Activated B cell treated with CpG ODN at 0.5 μM for 24 hours (primary cell): ENCODE measurements at regions of chr10 and their contacts with region 1.

Region 1: DNA sequence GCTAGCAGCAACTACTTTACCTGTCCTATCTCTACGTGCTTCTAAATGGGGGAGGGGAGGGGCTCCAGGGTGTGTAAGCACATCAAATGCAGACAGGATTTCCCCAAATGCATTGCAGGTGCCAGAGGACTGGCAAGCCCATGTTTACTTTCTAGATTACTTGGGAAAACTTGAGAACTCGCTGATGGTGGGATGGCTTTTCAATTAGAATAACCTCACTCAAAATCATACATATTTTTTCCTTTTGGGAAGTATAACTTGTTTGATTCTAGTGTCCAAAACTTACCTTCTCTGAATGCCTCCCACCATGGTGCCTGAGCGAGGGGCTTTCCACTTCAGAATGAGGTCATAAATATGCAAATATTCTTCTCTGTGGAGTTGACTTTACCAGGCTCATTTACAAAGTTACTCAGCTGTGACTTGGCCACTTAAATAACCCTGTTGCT is 191.3 kb upstream of the RHOBTB1 start:
- DNase-seq: peak; percentile 19
- ATAC-seq: peak; percentile 94
- H3K4me3 Mint-ChIP-seq: peak overlapping the region; percentile 68
- H3K27ac Mint-ChIP-seq: peak overlapping the region; percentile 91
- H3K4me1 Mint-ChIP-seq: peaks cover 43% of the 10 kb centered on the region
- H3K27me3 Mint-ChIP-seq: no peaks in the 10 kb centered on the region
- CTCF ChIP-seq: no peak

Region 2: GRCh38 chr10:60778214-60779029 is 356.9 kb before region 1 on chr10 and contains the start of gene CDK1:
- CTCF ChIA-PET with region 1: no interaction called
- POLR2A ChIA-PET with region 1: no interaction called
- intact Hi-C with region 1: loop called (anchors 5 kb)
- DNase-seq: peak; percentile 86
- ATAC-seq: peak; percentile 99
- H3K4me3 Mint-ChIP-seq: peak within 1 kb of the TSS; percentile 96
- H3K27ac Mint-ChIP-seq: peak within 1 kb of the TSS; percentile 84
- H3K4me1 Mint-ChIP-seq: peaks cover 17% of the 10 kb centered on the region
- H3K27me3 Mint-ChIP-seq: peaks cover 3% of the 10 kb centered on the region
- CTCF ChIP-seq: no peak
- total RNA-seq, gene CDK1: 1.5 and 1.9 TPM in 2 replicates

Region 3: DNA sequence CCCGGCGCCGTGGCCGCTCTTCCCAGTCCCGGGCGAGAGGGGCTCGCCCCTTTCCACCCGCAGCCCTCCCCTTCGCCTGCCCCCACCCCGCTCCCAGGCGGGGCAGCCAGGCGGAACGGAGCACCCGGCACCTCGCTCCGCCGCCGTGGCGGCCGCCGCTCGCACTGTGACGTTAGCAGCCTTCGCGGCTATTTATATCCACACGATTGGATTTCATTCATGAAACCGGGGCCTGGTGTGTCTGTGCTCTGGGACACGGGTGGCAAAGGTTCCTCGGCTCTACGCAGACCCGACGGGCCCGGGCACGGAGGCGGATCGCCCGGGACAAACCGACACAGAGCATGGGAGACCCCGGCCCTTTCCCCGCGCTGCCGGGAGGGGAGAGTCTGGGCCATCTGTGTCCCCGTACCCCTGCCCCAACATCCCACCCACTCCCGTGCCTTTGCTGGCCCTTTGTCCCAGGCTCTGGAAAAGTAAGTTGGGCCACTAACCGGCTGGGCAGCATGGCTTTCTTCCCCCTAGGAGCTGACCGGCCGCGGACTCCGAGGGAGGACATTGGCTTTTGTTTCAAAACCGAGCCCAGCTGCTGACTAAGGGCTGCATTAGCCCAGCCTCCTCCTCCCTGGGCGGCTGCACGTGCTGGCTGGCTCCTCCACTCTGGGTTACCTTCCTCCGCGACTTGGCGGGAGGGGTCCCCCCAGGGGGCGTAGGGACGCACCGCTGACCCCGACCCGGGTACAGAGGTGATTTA is 191.0 kb before region 1 on chr10 and contains the start of gene RHOBTB1:
- CTCF ChIA-PET with region 1: no interaction called
- POLR2A ChIA-PET with region 1: no interaction called
- intact Hi-C with region 1: loop called (anchors 2 kb)
- DNase-seq: peak; percentile 27
- ATAC-seq: peak; percentile 60
- H3K4me3 Mint-ChIP-seq: peak within 1 kb of the TSS; percentile 85
- H3K27ac Mint-ChIP-seq: peak within 1 kb of the TSS; percentile 61
- H3K4me1 Mint-ChIP-seq: peaks cover 14% of the 10 kb centered on the region
- H3K27me3 Mint-ChIP-seq: peaks cover 23% of the 10 kb centered on the region
- CTCF ChIP-seq: no peak
- total RNA-seq, gene RHOBTB1: 0.24 and 0.51 TPM in 2 replicates

Region 4: DNA sequence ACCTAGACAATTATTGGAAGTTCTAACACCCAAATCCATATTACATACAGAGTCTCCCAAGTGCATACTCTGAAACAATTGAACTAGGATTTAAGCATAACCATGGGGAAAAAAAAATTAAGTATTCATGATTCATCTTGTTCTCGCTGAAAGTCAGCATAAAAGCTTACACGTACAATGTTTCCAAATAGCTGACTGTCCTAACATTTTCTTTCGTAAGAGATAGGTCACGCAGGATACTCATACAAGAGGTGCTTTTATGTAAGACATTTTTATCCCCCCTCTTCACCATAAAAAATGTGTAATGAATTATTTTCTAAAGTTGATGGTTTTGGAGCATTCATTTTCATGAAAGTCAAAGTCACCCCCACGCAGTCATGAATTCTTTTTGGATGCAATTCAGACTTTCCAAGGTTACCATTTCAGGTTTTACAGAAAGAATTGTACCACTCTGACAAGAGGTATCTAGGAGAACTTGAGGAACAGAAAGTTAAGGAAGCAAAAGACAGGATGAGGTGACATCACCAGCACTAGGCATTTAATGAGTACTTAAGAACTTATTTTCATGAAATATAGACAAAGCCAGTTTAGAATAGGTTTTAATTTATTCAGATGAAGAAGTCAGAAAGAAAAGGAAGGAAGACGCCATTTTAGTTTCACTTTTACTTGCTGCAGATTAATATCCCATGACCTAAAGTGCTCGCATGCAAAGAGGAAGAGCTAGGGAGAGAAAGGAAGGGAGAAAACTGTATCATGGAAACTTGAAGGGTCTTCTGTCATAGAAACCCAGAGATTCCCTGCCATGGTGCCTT is 262.1 kb after region 1 on chr10:
- CTCF ChIA-PET with region 1: no interaction called
- POLR2A ChIA-PET with region 1: no interaction called
- intact Hi-C with region 1: loop called (anchors 10 kb)
- DNase-seq: no peak
- ATAC-seq: peak; percentile 70
- H3K4me3 Mint-ChIP-seq: peak overlapping the region; percentile 59
- H3K27ac Mint-ChIP-seq: peak overlapping the region; percentile 16
- H3K4me1 Mint-ChIP-seq: peaks cover 18% of the 10 kb centered on the region
- H3K27me3 Mint-ChIP-seq: no peaks in the 10 kb centered on the region
- CTCF ChIP-seq: no peak

Region 5: DNA sequence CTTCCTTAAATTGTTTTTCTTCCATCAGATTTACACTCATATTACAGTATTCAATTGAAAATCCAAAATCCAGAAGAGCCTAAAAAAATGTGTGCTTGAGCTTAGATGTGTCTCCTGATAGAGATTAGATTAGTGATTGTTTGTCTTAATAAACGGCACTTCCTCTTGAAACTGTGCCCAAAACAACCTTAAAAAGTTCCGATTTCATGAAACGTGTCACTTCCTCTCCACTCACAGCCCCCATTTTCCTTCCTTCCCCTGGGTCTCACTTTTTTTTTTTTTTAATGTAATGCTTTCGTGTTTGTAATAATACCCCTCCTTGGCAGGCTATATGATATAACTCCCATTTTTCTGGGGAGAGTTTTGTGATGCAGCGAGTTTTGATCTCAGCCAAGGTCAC is 1554.4 kb after region 1 on chr10:
- CTCF ChIA-PET with region 1: no interaction called
- POLR2A ChIA-PET with region 1: no interaction called
- intact Hi-C with region 1: no loop called
- DNase-seq: no peak
- ATAC-seq: peak; percentile 76
- H3K4me3 Mint-ChIP-seq: peak overlapping the region; percentile 70
- H3K27ac Mint-ChIP-seq: peak overlapping the region; percentile 75
- H3K4me1 Mint-ChIP-seq: peaks cover 43% of the 10 kb centered on the region
- H3K27me3 Mint-ChIP-seq: no peaks in the 10 kb centered on the region
- CTCF ChIP-seq: no peak